Activated T-helper 1 cell treated with anti-CD3 and anti-CD28 coated beads, Interleukin-12 subunit alpha, Interleukin-12 subunit beta, Interleukin-2, Interleukin-4 antibody, amounts not matched to agents 30 ng/mL and 10 ng/mL and 1 ng/mL, durations not matched to agents 14 hours and 24 hours and 36 hours (primary cell): ENCODE measurements at regions of chr12 and their contacts with region 1.

Region 1: DNA sequence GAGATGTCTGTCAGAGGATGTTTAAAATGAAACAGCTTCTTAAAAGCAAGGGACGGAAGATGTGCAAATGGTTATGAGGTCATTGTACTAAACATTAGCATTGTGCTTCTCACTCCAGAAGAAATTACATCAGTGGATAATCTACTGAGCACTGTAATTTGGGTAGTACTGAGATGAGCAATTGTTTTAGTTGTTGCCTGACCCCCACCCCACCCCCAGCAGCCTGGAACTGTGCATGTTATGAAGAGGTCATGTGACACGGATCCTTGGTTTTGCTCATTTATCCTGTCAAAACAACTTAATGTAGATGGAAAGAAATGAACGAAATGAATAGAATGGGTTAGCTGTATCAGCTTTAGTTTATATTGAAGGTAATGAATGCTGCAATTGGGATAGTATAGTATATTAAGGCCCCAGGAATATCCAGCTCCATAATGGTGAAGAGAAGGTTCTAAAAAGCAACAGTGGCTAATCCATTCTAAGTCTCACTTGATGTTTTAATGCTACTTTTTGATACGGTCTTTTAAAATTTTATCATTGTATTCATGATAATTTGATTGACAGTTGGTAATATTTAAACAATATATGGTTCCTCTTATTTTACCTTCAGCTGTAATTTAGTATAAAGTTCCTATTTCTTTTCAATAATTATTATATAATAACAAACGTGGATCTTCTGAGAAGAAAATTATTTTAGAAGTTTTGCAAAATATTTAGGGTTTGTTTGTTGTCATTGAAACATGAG is 58.5 kb downstream of the WNK1 start:
- DNase-seq: no peak
- H3K4me3 Mint-ChIP-seq: peak overlapping the region; percentile 20
- H3K27ac Mint-ChIP-seq: peak overlapping the region; percentile 75
- H3K4me1 Mint-ChIP-seq: peaks cover 68% of the 10 kb centered on the region
- H3K27me3 Mint-ChIP-seq: no peaks in the 10 kb centered on the region

Region 2: GRCh38 chr12:452667-453210 is 358.1 kb before region 1 on chr12:
- intact Hi-C with region 1: loop called (anchors 5 kb)
- DNase-seq: peak; percentile 74
- H3K4me3 Mint-ChIP-seq: no peak overlapping the region
- H3K27ac Mint-ChIP-seq: no peak overlapping the region
- H3K4me1 Mint-ChIP-seq: peaks cover 4% of the 10 kb centered on the region
- H3K27me3 Mint-ChIP-seq: peaks cover 22% of the 10 kb centered on the region

Region 3: GRCh38 chr12:569803-570434 is 240.9 kb before region 1 on chr12:
- intact Hi-C with region 1: loop called (anchors 1 kb)
- DNase-seq: peak; percentile 82
- H3K4me3 Mint-ChIP-seq: peak overlapping the region; percentile 79
- H3K27ac Mint-ChIP-seq: peak overlapping the region; percentile 36
- H3K4me1 Mint-ChIP-seq: peaks cover 44% of the 10 kb centered on the region
- H3K27me3 Mint-ChIP-seq: no peaks in the 10 kb centered on the region

Region 4: DNA sequence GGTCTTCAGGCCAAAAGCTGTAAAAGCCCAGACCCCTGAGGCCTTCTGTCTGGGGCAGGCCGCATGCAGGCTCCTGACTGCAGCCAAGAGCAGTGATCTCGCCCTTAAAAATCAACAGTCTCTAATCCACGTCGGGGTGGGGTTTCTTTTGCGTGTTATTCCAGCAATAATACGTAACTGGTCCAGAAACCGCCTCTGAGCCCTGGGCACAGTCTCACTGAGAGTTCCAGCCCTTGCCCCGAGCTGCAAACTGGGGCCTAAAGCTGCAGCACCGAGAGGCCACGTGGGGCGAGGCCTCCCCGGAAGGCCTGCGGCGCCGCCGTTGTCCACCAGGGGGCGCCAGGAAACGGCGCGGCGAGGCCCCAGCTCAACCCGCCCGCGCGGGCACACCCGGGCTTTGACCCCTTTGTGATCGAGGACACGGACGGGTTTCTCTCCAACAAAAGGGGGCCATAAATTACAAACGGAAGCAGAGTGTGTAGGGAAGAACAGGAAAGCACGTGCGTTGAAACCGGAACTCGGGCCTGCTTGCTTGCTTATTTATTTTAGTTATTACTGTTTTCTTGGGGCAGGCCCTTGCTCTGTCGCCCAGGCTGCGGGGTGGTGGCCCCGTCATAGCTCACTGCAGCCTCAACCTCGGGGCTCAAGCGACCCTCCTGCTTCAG is 234.8 kb before region 1 on chr12:
- intact Hi-C with region 1: loop called (anchors 1 kb)
- DNase-seq: peak; percentile 81
- H3K4me3 Mint-ChIP-seq: no peak overlapping the region
- H3K27ac Mint-ChIP-seq: peak overlapping the region; percentile 80
- H3K4me1 Mint-ChIP-seq: peaks cover 33% of the 10 kb centered on the region
- H3K27me3 Mint-ChIP-seq: peaks cover 4% of the 10 kb centered on the region

Region 5: GRCh38 chr12:630656-631632 is 179.9 kb before region 1 on chr12:
- intact Hi-C with region 1: loop called (anchors 5 kb)
- DNase-seq: peak; percentile 84
- H3K4me3 Mint-ChIP-seq: peak overlapping the region; percentile 96
- H3K27ac Mint-ChIP-seq: peak overlapping the region; percentile 98
- H3K4me1 Mint-ChIP-seq: peaks cover 45% of the 10 kb centered on the region
- H3K27me3 Mint-ChIP-seq: no peaks in the 10 kb centered on the region

Region 6: GRCh38 chr12:795305-795704 is 15.5 kb before region 1 on chr12:
- intact Hi-C with region 1: loop called (anchors 1 kb)
- DNase-seq: no peak
- H3K4me3 Mint-ChIP-seq: peak overlapping the region; percentile 6
- H3K27ac Mint-ChIP-seq: peak overlapping the region; percentile 87
- H3K4me1 Mint-ChIP-seq: peaks cover 64% of the 10 kb centered on the region
- H3K27me3 Mint-ChIP-seq: no peaks in the 10 kb centered on the region

Region 7: GRCh38 chr12:848173-848865 is 37.5 kb after region 1 on chr12:
- intact Hi-C with region 1: loop called (anchors 5 kb)
- DNase-seq: no peak
- H3K4me3 Mint-ChIP-seq: peak overlapping the region; percentile 13
- H3K27ac Mint-ChIP-seq: peak overlapping the region; percentile 81
- H3K4me1 Mint-ChIP-seq: peaks cover 52% of the 10 kb centered on the region
- H3K27me3 Mint-ChIP-seq: no peaks in the 10 kb centered on the region

Region 8: GRCh38 chr12:868722-869121 is 57.9 kb after region 1 on chr12:
- intact Hi-C with region 1: no loop called
- DNase-seq: no peak
- H3K4me3 Mint-ChIP-seq: no peak overlapping the region
- H3K27ac Mint-ChIP-seq: no peak overlapping the region
- H3K4me1 Mint-ChIP-seq: peaks cover 13% of the 10 kb centered on the region
- H3K27me3 Mint-ChIP-seq: no peaks in the 10 kb centered on the region